ENCODE measurements at regions of chr11 and their contacts with region 1.

Region 1: GRCh38 chr11:129695575-129696308 is 119.9 kb upstream of the TMEM45B start:
- DNase-seq: peak; percentile 88
- H3K4me3 Mint-ChIP-seq: peak overlapping the region; percentile 77
- H3K27ac Mint-ChIP-seq: peak overlapping the region; percentile 41
- H3K4me1 Mint-ChIP-seq: peaks cover 6% of the 10 kb centered on the region
- H3K27me3 Mint-ChIP-seq: peaks cover 3% of the 10 kb centered on the region

Region 2: GRCh38 chr11:129364143-129364654 is 331.5 kb before region 1 on chr11:
- intact Hi-C with region 1: loop called (anchors 1 kb)
- DNase-seq: peak; percentile 94
- H3K4me3 Mint-ChIP-seq: no peak overlapping the region
- H3K27ac Mint-ChIP-seq: no peak overlapping the region
- H3K4me1 Mint-ChIP-seq: no peaks in the 10 kb centered on the region
- H3K27me3 Mint-ChIP-seq: peaks cover 51% of the 10 kb centered on the region

Region 3: GRCh38 chr11:129375751-129376657 is 319.7 kb before region 1 on chr11 and contains the start of gene BARX2:
- intact Hi-C with region 1: loop called (anchors 2 kb)
- DNase-seq: peak; percentile 80
- H3K4me3 Mint-ChIP-seq: peak within 1 kb of the TSS; percentile 86
- H3K27ac Mint-ChIP-seq: peak within 1 kb of the TSS; percentile 52
- H3K4me1 Mint-ChIP-seq: peaks cover 26% of the 10 kb centered on the region
- H3K27me3 Mint-ChIP-seq: peaks cover 72% of the 10 kb centered on the region
- total RNA-seq, gene BARX2: 4.1 and 4.7 TPM in 2 replicates

Region 4: DNA sequence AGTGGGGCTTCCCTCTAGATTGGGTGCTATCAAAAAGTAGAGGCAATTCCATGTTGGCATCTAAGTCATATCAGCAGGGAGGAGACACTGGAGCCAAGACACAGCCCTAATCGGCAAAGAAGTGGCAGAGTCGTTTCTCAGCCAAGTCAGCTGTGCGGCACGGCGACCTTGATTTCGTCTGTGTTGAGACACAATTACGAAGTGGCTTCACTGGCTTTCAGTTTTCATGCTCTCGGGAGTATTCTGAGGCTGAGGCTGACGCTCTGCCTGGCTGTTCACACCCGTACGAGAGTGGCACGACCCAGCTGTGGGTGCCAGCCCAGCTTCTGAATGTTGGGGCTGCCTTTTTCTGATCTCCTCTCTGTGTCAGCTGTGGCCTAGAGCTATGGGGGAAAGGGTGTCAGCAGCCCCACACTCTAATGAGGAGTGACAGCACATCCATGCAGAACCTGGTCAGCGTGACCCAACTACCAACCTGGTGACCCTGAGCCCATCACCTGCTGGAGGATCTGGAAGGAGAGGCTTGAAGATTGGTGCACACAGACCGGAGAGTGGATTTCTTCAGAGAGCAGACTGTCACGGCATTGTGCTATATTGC is 14.2 kb after region 1 on chr11:
- intact Hi-C with region 1: no loop called
- DNase-seq: no peak
- H3K4me3 Mint-ChIP-seq: no peak overlapping the region
- H3K27ac Mint-ChIP-seq: no peak overlapping the region
- H3K4me1 Mint-ChIP-seq: no peaks in the 10 kb centered on the region
- H3K27me3 Mint-ChIP-seq: no peaks in the 10 kb centered on the region

Region 5: DNA sequence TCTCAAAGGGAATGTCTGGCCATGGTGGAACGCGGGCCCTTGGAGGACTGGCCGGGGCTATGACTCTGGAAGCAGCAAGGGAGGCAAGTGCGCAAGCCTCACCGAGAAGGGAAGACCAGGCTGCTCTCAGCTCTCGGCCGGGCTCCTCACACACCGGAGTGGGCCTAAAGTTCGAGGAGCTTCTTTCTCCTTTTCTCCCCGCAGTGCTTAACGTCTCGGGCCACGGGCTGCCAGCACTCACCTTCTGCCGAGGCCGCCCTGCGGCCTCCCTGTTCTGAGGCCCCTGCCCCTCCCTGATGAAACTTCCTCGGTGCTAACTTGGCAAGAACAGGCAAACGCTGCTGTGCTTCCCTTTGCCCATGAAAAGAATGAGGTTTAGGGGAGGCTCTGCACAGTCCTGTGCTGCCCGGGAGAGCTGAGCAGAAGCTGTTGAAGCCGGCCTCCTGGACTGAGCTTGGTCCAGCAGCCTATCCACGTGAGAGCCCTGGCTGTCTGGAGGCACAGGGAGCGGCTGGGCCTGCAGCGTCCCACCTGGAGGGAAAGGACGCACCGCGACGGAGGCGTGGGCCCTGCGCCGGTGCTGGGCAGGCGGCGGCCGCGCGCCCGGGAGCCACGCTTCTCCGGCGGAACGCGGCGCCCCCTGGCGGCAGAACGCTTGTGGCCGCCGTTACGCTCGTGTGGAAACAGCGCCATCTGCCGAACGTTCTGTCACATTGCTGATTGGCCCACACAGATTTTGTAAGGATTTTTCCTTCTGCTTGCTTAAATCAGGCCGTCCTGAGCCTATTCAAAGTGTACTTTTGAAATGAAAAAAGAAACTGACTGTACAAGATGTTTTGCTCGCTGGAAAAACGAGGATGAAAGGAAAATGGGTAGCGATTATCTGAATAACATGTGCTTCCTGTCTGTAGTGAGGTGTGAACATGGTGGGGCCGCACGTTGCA is 54.9 kb after region 1 on chr11:
- intact Hi-C with region 1: loop called (anchors 2 kb)
- DNase-seq: peak; percentile 94
- H3K4me3 Mint-ChIP-seq: no peak overlapping the region
- H3K27ac Mint-ChIP-seq: no peak overlapping the region
- H3K4me1 Mint-ChIP-seq: peaks cover 2% of the 10 kb centered on the region
- H3K27me3 Mint-ChIP-seq: peaks cover 16% of the 10 kb centered on the region